CD8-positive, alpha-beta T cell (primary cell): ENCODE measurements at regions of chr16 and their contacts with region 1.

Region 1: DNA sequence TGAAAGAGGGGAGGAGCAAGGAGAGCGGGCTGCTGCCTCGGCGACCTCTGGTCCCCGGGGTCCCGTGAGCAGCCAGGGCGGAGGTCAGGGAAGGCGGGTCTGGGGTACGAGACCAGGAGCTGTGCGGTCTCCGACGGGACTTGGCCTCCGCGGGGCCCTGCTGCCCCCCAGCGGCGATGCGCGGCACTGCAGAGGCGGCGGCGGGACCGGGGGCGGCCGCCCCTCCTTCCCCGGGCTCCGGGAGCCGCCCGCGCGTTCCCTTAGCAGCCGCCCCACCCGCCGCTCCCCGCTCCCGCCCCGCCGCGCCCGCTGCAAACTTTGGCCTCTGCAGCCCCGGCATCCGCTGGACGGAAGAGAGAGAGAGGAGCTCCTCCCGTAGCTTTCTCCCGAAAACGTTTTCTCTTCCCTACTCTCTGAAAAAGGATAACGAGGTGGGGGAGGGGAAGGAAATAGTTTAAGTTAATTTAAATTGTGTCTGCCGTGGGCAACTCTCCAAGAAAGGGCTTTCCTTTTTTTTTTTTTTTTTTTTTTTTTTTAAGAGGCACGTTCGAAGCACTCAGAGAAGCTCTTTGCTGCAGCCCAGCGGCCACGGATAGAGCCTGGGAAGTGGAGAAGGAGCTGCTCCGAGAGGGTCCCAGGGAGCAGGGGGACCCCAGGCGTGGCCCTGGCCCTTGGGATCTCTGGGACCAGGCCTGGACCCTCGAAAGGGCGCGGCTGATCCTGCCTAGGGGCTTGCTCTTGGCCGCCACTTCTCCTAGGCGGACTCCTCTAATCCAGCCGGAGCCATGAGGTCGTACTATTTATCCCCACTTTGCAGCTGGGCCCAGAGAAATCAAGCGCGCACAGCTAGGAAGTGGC is 43.2 kb downstream of the C16orf82 start:
- DNase-seq: peak; percentile 64 to 85 (median 72)
- ATAC-seq: peak; percentile 98
- H3K4me3 ChIP-seq: peak overlapping the region; percentile 29 to 43
- H3K4me3 Mint-ChIP-seq: peak overlapping the region; percentile 66
- H3K27ac ChIP-seq: no peak overlapping the region
- H3K27ac Mint-ChIP-seq: no peak overlapping the region
- H3K4me1 ChIP-seq: peaks cover 9% of the 10 kb centered on the region
- H3K4me1 Mint-ChIP-seq: no peaks in the 10 kb centered on the region
- H3K27me3 ChIP-seq: no peaks in the 10 kb centered on the region
- H3K27me3 Mint-ChIP-seq: peaks cover 7% of the 10 kb centered on the region
- CTCF ChIP-seq: peak; percentile 74

Region 2: DNA sequence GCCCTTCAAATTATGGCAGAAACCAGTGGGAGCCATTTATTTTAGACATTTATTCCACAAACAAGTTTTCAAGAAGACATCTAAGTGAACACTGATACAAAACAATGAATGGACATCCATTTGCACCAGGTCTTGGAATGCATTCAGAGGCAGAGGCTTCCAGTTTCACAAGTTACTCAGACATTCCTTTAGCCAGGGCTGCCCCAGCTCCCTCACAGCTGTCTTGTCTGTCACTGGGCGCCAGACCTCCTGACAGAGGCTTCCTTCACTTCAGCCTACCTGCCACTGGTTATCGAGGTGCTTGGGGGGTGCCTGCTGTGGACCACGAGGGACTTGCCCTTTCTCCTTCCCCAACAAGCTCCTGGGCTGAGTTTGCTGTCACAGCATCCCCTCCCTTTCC is 1873.9 kb before region 1 on chr16:
- CTCF ChIA-PET with region 1: no interaction called
- POLR2A ChIA-PET with region 1: no interaction called
- intact Hi-C with region 1: loop called (anchors 5 to 10 kb)
- DNase-seq: no peak
- ATAC-seq: no peak
- H3K4me3 ChIP-seq: no peak overlapping the region
- H3K4me3 Mint-ChIP-seq: no peak overlapping the region
- H3K27ac ChIP-seq: no peak overlapping the region
- H3K27ac Mint-ChIP-seq: no peak overlapping the region
- H3K4me1 ChIP-seq: no peaks in the 10 kb centered on the region
- H3K4me1 Mint-ChIP-seq: peaks cover 3% of the 10 kb centered on the region
- H3K27me3 ChIP-seq: no peaks in the 10 kb centered on the region
- H3K27me3 Mint-ChIP-seq: no peaks in the 10 kb centered on the region
- CTCF ChIP-seq: no peak

Region 3: DNA sequence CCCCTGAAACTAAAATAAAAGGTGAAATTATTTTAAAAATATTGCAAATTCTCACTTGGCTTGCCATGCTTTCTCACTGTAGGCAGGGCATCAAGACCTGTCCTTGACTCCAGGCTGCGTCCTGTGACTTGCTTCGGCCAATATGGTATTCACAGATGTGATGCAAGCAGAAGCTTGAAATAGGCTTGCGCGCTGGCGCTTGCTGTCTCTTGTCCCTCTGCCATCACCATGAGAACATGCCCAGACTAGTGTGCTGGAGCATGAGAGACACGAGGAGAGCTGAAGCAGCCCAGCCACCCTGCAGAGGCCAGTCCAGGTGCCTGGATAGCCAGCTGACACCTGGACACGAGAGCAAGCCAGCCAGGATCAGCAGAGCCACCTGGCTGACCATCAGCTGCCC is 1830.4 kb before region 1 on chr16:
- CTCF ChIA-PET with region 1: no interaction called
- POLR2A ChIA-PET with region 1: no interaction called
- intact Hi-C with region 1: loop called in 1 of 2 experiments (anchors 2 kb)
- DNase-seq: no peak
- ATAC-seq: no peak
- H3K4me3 ChIP-seq: no peak overlapping the region
- H3K4me3 Mint-ChIP-seq: no peak overlapping the region
- H3K27ac ChIP-seq: no peak overlapping the region
- H3K27ac Mint-ChIP-seq: no peak overlapping the region
- H3K4me1 ChIP-seq: no peaks in the 10 kb centered on the region
- H3K4me1 Mint-ChIP-seq: no peaks in the 10 kb centered on the region
- H3K27me3 ChIP-seq: no peaks in the 10 kb centered on the region
- H3K27me3 Mint-ChIP-seq: no peaks in the 10 kb centered on the region
- CTCF ChIP-seq: no peak

Region 4: DNA sequence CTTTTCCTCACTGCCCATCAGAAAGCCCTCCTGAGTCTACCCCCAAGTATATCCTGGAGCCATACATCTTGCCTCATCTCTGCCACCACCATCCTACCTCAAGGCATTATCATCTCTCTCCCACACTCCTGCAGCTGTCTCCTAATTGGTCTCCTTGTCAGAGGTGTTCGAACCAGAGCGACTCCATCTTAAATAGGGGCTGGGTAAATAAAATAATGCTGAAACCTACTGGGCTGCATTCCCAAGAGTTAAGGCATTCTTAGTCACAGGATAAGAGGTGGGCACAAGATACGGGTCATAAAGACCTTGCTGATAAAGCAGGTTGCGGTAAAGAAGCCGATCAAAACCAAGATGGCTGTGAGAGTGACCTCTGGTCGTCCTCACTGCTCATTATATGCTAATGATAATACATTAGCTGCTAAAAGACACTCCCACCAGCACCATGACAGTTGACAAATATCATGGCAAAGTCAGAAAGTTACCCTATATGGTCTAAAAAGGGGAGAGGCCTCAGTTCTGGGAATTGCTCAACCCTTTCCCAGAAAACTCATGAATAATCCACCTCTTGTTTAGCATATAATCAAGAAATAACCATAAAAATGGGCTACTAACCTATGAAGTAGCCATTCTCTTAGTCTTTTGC is 140.2 kb before region 1 on chr16:
- CTCF ChIA-PET with region 1: no interaction called
- POLR2A ChIA-PET with region 1: no interaction called
- intact Hi-C with region 1: no loop called
- DNase-seq: no peak
- ATAC-seq: no peak
- H3K4me3 ChIP-seq: no peak overlapping the region
- H3K4me3 Mint-ChIP-seq: no peak overlapping the region
- H3K27ac ChIP-seq: no peak overlapping the region
- H3K27ac Mint-ChIP-seq: no peak overlapping the region
- H3K4me1 ChIP-seq: no peaks in the 10 kb centered on the region
- H3K4me1 Mint-ChIP-seq: no peaks in the 10 kb centered on the region
- H3K27me3 ChIP-seq: no peaks in the 10 kb centered on the region
- H3K27me3 Mint-ChIP-seq: peaks cover 3% of the 10 kb centered on the region
- CTCF ChIP-seq: no peak

Region 5: GRCh38 chr16:27123795-27124409 is 14.0 kb after region 1 on chr16:
- CTCF ChIA-PET with region 1: interaction called, 10 read pairs
- POLR2A ChIA-PET with region 1: no interaction called
- intact Hi-C with region 1: no loop called
- DNase-seq: no peak
- ATAC-seq: no peak
- H3K4me3 ChIP-seq: no peak overlapping the region
- H3K4me3 Mint-ChIP-seq: no peak overlapping the region
- H3K27ac ChIP-seq: no peak overlapping the region
- H3K27ac Mint-ChIP-seq: no peak overlapping the region
- H3K4me1 ChIP-seq: no peaks in the 10 kb centered on the region
- H3K4me1 Mint-ChIP-seq: no peaks in the 10 kb centered on the region
- H3K27me3 ChIP-seq: no peaks in the 10 kb centered on the region
- H3K27me3 Mint-ChIP-seq: peaks cover 2% of the 10 kb centered on the region
- CTCF ChIP-seq: no peak

Region 6: GRCh38 chr16:27326738-27327585 is 217.1 kb after region 1 on chr16:
- CTCF ChIA-PET with region 1: no interaction called
- POLR2A ChIA-PET with region 1: no interaction called
- intact Hi-C with region 1: no loop called
- DNase-seq: peak in 7 of 9 experiments; percentile 25 to 60 (median 56)
- ATAC-seq: peak; percentile 69
- H3K4me3 ChIP-seq: peak overlapping the region in 1 of 2 experiments; percentile 34
- H3K4me3 Mint-ChIP-seq: peak overlapping the region; percentile 43
- H3K27ac ChIP-seq: no peak overlapping the region
- H3K27ac Mint-ChIP-seq: peak overlapping the region; percentile 69
- H3K4me1 ChIP-seq: peaks cover 52% of the 10 kb centered on the region
- H3K4me1 Mint-ChIP-seq: peaks cover 69% of the 10 kb centered on the region
- H3K27me3 ChIP-seq: no peaks in the 10 kb centered on the region
- H3K27me3 Mint-ChIP-seq: no peaks in the 10 kb centered on the region
- CTCF ChIP-seq: no peak